OCI-LY7 (cell line): ENCODE measurements at regions of chr14 and their contacts with region 1.

Region 1: GRCh38 chr14:74249433-74250375 is 10.5 kb downstream of the VSX2 start:
- DNase-seq: no peak
- H3K4me3 ChIP-seq: no peak overlapping the region
- H3K27ac ChIP-seq: no peak overlapping the region
- H3K4me1 ChIP-seq: peaks cover 23% of the 10 kb centered on the region
- CTCF ChIP-seq: no peak

Region 2: GRCh38 chr14:74109369-74109768 is 140.3 kb before region 1 on chr14:
- CTCF ChIA-PET with region 1: no interaction called
- POLR2A ChIA-PET with region 1: no interaction called
- intact Hi-C with region 1: loop called (anchors 1 kb)
- DNase-seq: no peak
- H3K4me3 ChIP-seq: no peak overlapping the region
- H3K27ac ChIP-seq: no peak overlapping the region
- H3K4me1 ChIP-seq: no peaks in the 10 kb centered on the region
- CTCF ChIP-seq: no peak

Region 3: DNA sequence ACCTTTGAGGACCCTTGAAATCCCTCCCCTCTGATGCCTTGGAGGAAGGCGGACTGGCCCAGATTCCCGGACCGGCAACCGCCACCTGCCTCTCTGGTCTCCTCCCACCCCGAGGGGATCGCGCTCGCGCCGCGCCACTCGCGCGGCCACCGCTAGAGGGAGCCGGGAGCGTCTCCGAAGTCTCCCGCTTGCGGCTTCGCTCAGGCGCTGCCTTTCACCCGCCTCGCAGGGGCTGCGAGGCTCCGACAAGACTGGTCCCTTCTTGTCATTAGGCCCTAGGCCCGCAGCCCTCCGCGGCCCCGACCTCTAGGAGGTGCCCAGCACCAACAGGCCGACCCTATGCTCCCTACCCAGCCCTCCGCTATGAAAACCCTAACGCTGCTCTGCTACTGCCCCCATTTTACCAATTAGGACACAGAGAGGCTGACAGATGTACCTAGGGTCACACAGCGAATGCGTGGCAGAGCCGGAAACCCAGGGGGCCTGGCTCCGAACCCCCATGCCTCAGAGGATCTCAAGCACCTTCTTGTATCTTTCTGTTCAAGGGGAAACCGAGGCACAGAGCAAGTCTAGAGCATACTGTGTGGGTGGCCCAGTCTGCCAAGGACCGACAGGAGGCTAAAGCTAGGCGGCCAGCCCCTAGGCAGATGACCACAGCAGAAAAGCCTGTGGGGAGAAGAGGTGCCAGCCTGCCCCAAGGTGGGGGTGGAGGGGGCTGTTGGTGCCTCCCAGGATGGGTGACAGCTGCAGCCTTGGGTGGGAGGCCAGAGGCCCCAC is 31.8 kb before region 1 on chr14:
- CTCF ChIA-PET with region 1: no interaction called
- POLR2A ChIA-PET with region 1: no interaction called
- intact Hi-C with region 1: loop called (anchors 1 kb)
- DNase-seq: peak; percentile 72
- H3K4me3 ChIP-seq: no peak overlapping the region
- H3K27ac ChIP-seq: no peak overlapping the region
- H3K4me1 ChIP-seq: no peaks in the 10 kb centered on the region
- CTCF ChIP-seq: peak; percentile 89